ENCODE measurements at regions of chr7 and their contacts with region 1.

Region 1: DNA sequence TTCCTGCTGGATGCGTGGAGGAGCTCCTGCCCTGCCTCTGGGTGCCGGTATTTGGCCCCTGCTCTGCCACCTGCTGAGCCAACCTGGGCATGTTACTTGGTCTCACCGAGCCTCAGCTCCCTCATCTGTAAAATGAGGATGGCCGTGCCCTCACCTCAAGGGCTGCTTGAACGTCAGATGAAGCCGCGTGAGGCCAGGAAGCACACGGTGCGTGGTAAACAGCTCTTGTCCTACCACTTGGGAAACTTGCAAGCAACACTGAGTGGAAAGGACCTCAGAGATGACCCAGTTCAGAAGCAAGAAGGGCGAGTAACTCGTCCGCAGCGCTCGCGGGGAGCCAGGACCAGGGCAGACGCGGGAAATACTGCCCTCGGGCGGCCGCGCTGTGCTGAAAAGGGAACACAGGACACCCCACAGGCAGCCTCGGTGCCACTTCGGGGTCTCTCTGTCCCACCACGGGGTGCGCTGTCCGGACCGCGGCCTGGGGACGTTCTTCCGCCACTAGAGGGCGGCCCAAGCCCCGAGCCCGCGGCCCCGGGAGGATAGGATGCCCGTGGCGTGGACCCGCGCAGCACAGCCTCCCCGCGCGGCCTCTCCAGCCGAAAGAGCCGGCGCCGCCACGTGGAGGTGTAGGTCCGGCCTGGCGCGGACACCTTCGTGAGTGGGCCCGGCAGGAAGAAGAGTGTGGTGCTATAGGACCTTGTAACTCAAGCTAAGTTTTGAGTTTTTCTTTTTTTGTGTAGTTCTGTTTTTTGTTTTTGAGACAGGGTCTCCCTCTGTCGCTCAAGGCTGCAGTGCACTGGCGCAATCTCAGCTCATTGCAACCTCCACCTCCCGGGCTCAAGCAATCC is 94.1 kb downstream of the PRKAG2 start:
- DNase-seq: peak; percentile 77
- H3K4me3 Mint-ChIP-seq: peak overlapping the region; percentile 77
- H3K27ac Mint-ChIP-seq: no peak overlapping the region
- H3K4me1 Mint-ChIP-seq: peaks cover 2% of the 10 kb centered on the region
- H3K27me3 Mint-ChIP-seq: no peaks in the 10 kb centered on the region

Region 2: DNA sequence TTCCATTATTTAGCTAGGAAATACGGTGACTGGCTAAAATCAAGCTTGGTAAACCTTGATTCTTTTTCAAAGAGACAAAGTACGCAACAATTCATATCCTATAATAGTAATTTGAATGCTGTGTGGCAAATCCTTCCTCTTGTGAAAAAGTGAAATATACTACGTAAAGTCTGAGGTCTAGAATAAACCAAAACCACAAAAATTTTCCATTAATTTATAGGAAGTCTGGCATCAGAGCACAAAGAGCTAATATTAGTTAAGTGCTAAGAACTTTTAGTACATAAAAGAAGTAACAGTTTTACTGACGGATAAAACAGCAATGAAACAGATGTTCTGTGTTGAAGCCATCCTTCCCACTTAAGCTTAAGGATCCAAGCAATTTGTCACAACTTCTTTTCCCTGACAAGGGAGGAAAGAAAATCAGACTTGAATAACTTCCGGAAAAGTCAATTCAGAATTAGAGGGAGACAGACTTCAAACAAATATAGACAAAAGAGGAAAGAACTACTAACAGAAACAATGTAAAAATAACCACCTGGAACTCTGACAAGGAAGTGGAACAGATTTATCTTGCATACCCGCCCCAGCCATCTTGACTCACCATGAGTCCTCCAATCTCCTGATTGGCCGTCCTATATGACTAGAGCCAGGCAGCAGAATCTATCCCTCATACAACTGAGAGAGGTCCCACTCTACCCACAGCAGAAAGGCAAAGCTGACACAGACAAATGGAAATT is 297.7 kb before region 1 on chr7:
- CTCF ChIA-PET with region 1: no interaction called
- intact Hi-C with region 1: no loop called
- DNase-seq: peak; percentile 14
- H3K4me3 Mint-ChIP-seq: no peak overlapping the region
- H3K27ac Mint-ChIP-seq: no peak overlapping the region
- H3K4me1 Mint-ChIP-seq: peaks cover 19% of the 10 kb centered on the region
- H3K27me3 Mint-ChIP-seq: no peaks in the 10 kb centered on the region

Region 3: DNA sequence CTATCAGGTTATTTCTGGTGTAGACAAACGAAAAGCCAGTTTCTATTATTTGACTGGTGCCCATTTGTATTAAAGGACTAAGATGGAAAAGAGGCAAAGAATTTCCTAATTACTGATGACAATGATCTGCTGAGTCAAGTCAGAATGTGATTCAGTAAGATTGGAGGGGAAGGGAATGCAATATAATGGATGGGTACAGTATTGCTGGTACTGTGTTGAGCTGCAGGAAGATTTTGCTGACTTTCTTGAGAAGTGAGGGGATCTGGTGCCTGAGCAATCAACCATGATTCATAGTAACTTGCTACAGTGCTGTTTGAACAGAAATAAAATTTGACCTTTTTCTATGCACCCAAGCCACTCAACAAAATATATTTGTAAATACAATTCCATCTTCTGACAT is 124.0 kb before region 1 on chr7:
- CTCF ChIA-PET with region 1: no interaction called
- intact Hi-C with region 1: no loop called
- DNase-seq: no peak
- H3K4me3 Mint-ChIP-seq: no peak overlapping the region
- H3K27ac Mint-ChIP-seq: no peak overlapping the region
- H3K4me1 Mint-ChIP-seq: no peaks in the 10 kb centered on the region
- H3K27me3 Mint-ChIP-seq: no peaks in the 10 kb centered on the region

Region 4: DNA sequence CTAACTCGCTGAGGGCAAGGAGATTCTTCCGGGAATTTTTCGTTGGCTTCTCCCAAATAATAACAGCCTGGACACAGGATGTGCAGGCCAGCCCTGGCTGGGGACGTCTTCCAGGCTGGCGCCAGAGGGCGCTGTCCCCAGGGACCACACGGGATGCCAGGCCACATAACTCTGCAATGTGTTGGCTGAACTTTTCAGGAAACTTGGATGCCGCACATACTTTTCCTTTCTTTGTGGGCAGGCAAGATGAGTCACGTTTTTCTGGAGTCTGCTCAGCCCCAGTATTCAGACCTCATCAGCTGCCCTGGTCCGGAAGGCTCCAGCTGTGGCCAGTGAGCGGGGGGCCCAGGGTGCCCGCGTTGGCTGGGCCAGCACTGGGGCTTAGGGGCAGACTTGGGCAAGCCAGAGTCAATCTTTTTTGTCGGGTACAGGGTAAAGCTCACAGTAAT is 28.7 kb before region 1 on chr7:
- CTCF ChIA-PET with region 1: interaction called, 25 read pairs
- intact Hi-C with region 1: loop called (anchors 1 kb)
- DNase-seq: peak; percentile 32
- H3K4me3 Mint-ChIP-seq: no peak overlapping the region
- H3K27ac Mint-ChIP-seq: no peak overlapping the region
- H3K4me1 Mint-ChIP-seq: peaks cover 18% of the 10 kb centered on the region
- H3K27me3 Mint-ChIP-seq: no peaks in the 10 kb centered on the region

Region 5: DNA sequence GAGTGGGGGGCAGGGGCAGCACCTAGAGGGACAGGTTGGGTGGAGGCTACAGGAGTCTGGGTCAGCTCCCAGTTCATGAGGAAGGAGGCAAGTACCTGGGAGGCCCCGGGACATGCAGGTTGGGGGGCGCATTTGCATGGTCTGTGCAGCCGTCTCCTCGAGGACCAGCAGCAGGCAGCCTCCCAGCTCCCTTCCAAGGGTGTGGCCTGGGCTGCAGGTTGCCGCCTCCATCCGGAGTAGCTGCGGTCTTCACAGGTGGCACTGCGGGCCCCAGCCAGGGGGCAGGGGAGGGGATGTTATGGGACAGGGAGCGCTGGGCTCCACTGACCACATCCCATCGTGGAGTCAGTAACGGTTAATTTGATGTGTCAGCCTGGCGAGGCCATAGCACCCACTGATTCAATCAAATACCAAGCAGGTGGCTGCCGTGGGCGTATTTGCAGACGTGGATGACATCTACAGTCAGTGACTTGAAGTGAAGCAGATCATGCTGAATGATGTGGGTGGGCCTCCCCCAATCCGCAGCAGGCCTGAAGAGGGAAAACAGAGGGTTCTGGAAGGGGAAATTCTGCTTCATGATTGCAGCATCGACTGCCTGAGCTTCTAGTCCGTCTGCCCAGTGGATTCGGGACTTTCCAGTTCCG is 12.5 kb after region 1 on chr7:
- CTCF ChIA-PET with region 1: interaction called, 17 read pairs
- intact Hi-C with region 1: no loop called
- DNase-seq: peak; percentile 81
- H3K4me3 Mint-ChIP-seq: no peak overlapping the region
- H3K27ac Mint-ChIP-seq: no peak overlapping the region
- H3K4me1 Mint-ChIP-seq: peaks cover 10% of the 10 kb centered on the region
- H3K27me3 Mint-ChIP-seq: no peaks in the 10 kb centered on the region

Region 6: DNA sequence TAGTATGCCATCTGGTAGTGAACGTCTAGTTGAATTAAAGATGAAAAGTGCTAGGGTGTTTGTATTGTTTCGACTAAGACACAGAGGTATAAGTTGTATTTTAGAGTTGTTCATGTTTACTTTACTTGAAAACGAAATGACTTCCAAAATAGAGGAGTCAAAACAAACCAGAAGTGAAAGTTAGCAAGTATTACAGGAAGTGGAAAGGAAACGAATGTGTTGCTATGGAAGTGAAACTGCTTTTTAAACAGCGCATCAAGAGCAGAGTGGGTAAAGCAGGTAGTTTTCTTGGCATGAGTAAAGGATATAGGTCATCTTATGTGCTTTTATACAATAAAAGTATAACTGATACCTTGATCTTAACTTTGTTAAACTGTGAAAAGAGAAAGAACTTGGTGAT is 153.4 kb after region 1 on chr7:
- CTCF ChIA-PET with region 1: interaction called, 8 read pairs
- intact Hi-C with region 1: loop called (anchors 1 kb)
- DNase-seq: no peak
- H3K4me3 Mint-ChIP-seq: peak overlapping the region; percentile 45
- H3K27ac Mint-ChIP-seq: peak overlapping the region; percentile 73
- H3K4me1 Mint-ChIP-seq: peaks cover 30% of the 10 kb centered on the region
- H3K27me3 Mint-ChIP-seq: no peaks in the 10 kb centered on the region

Region 7: DNA sequence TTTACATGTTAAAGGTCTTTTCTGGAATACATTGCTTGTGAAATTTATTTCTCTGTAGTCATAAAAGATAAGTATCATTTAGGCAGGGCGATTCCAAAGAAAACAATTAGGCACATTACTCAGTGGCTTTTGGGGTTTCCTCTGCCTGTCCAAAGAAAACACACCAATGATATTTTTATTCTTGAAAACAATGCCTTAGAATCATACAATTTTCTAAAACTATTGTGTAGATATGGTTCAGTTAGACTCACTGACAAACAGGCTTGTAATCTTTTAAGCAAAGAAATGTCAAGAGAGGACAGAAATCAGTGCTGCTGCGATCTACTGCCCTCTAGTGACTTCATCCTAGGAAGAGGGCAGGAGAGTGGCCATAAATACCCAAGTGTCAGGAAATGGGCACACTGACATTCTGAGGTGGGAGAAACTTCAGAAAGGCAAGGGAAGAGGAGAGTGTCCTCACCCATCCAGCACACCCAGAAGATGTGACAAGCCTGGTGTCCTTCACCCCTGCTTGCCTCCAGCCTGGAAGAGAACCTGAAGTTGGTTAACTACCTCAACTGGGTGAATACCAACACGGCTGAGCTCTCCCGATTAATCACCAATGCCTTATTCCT is 363.1 kb after region 1 on chr7:
- CTCF ChIA-PET with region 1: interaction called, 6 read pairs
- intact Hi-C with region 1: loop called (anchors 2 kb)
- DNase-seq: peak; percentile 62
- H3K4me3 Mint-ChIP-seq: no peak overlapping the region
- H3K27ac Mint-ChIP-seq: peak overlapping the region; percentile 87
- H3K4me1 Mint-ChIP-seq: peaks cover 40% of the 10 kb centered on the region
- H3K27me3 Mint-ChIP-seq: no peaks in the 10 kb centered on the region

Region 8: GRCh38 chr7:152328234-152328633 is 545.4 kb after region 1 on chr7:
- CTCF ChIA-PET with region 1: no interaction called
- intact Hi-C with region 1: no loop called
- DNase-seq: no peak
- H3K4me3 Mint-ChIP-seq: no peak overlapping the region
- H3K27ac Mint-ChIP-seq: no peak overlapping the region
- H3K4me1 Mint-ChIP-seq: peaks cover 8% of the 10 kb centered on the region
- H3K27me3 Mint-ChIP-seq: no peaks in the 10 kb centered on the region

Measured in activated naive CD4-positive, alpha-beta T cell treated with anti-CD3 and anti-CD28 coated beads for 36 hours (primary cell).